Ovary (tissue), 10 donors: ENCODE measurements at regions of chr16 and their contacts with region 1.

Region 1: GRCh38 chr16:77236063-77236511 is 36.9 kb downstream of the SYCE1L start:
- DNase-seq: peak; percentile 69 to 92 (median 87)
- H3K4me3 ChIP-seq: no peak overlapping the region
- H3K27ac ChIP-seq: no peak overlapping the region
- H3K4me1 ChIP-seq: no peaks in the 10 kb centered on the region
- H3K27me3 ChIP-seq: no peaks in the 10 kb centered on the region
- CTCF ChIP-seq: peak; percentile 95 to 99 (median 97)
- EP300 ChIP-seq: no peak
- POLR2A ChIP-seq: no peak

Region 2: DNA sequence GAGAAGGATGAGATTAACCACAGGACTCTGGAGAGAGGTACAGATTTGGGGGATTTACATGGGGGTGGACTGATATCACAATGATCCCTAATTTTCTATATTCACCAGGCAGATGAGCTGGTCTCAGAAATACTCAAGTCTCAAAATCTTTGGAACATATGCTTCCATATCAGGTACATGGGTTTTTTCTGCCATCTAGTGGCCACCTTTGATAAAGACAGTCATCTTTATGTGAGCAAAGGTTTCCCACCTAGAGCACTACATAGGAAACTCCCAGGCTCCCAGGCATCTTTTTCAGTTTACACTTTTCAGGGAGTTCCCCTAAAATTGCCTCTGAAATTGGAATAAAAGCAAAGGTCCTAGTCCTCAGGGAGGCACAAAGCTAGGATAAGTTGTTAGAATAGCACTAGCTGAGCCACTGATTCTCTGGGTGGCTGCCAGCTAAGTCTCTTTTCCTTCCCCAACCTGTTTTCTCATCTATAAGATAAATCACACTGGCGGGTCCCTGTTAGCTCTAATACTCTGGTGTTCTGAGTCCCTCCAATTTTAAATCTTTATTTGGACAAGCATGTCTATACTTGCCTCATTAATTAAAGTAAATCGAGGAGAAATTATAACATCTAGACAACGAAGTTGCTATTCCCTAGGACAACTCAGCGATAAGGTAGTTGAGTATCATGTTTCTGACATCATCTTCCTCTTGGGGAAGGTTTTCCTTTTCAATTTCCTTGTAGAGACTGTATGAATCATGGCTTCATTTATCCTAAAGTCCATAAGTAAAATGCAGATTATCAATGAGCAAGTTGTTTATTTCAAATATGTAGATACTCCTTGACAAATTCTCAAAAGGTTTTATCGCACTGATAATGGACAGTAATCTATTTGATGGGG is 64.1 kb before region 1 on chr16:
- intact Hi-C with region 1: no loop called
- DNase-seq: no peak
- H3K4me3 ChIP-seq: no peak overlapping the region
- H3K27ac ChIP-seq: no peak overlapping the region
- H3K4me1 ChIP-seq: no peaks in the 10 kb centered on the region
- H3K27me3 ChIP-seq: no peaks in the 10 kb centered on the region
- CTCF ChIP-seq: peak in 2 of 3 donors; percentile 30 to 34
- EP300 ChIP-seq: no peak
- POLR2A ChIP-seq: no peak

Region 3: GRCh38 chr16:77298638-77299360 is 62.7 kb after region 1 on chr16:
- intact Hi-C with region 1: no loop called
- DNase-seq: peak in 2 of 5 donors; percentile 17
- H3K4me3 ChIP-seq: no peak overlapping the region
- H3K27ac ChIP-seq: no peak overlapping the region
- H3K4me1 ChIP-seq: no peaks in the 10 kb centered on the region
- H3K27me3 ChIP-seq: no peaks in the 10 kb centered on the region
- CTCF ChIP-seq: no peak
- EP300 ChIP-seq: no peak
- POLR2A ChIP-seq: no peak

Region 4: GRCh38 chr16:77584205-77584859 is 348.2 kb after region 1 on chr16:
- intact Hi-C with region 1: loop called (anchors 5 to 10 kb)
- DNase-seq: peak in 4 of 5 donors; percentile 25 to 49 (median 45)
- H3K4me3 ChIP-seq: no peak overlapping the region
- H3K27ac ChIP-seq: no peak overlapping the region
- H3K4me1 ChIP-seq: no peaks in the 10 kb centered on the region
- H3K27me3 ChIP-seq: no peaks in the 10 kb centered on the region
- CTCF ChIP-seq: peak; percentile 45 to 85 (median 64)
- EP300 ChIP-seq: no peak
- POLR2A ChIP-seq: no peak